AG04450 (cell line): ENCODE measurements at regions of chr6 and their contacts with region 1.

Region 1: DNA sequence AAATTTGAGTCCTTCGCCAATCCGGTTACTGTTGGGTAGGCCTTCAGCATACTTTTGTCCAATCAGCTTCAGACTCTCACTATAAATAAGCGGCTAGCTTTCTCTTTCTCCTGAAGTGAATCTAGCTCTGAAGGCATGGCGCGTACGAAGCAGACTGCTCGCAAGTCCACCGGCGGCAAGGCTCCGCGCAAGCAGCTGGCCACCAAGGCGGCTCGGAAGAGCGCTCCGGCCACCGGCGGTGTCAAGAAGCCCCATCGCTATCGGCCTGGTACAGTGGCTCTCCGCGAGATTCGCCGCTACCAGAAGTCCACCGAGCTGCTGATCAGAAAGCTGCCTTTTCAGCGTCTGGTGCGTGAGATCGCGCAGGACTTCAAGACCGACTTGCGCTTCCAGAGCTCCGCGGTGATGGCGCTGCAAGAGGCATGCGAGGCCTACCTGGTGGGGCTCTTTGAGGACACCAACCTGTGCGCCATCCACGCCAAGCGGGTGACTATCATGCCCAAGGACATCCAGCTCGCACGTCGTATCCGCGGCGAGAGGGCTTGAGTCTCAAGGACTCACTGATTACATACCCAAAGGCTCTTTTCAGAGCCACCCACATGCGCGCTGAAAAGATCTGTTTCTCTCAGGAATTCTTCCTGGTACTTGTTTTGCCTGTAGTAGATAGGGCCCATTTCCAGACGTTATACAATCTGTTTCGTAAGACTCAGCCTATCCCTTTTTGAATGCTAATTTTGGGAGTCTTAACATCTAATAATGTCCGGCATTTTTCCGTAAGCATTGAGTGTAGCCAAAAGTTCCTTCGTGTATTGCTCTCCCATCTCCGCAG is 102.0 kb downstream of the OR2B2 start:
- DNase-seq: peak; percentile 95
- H3K4me3 ChIP-seq: peak overlapping the region; percentile 85
- H3K27ac ChIP-seq: peak overlapping the region; percentile 96
- H3K27me3 ChIP-seq: no peaks in the 10 kb centered on the region
- CTCF ChIP-seq: peak; percentile 24

Region 2: GRCh38 chr6:27795697-27796494 is 14.3 kb before region 1 on chr6:
- CTCF ChIA-PET with region 1: interaction called, 48 read pairs
- POLR2A ChIA-PET with region 1: interaction called, 5 read pairs
- DNase-seq: peak; percentile 84
- H3K4me3 ChIP-seq: no peak overlapping the region
- H3K27ac ChIP-seq: no peak overlapping the region
- H3K27me3 ChIP-seq: no peaks in the 10 kb centered on the region
- CTCF ChIP-seq: peak; percentile 83

Region 3: GRCh38 chr6:27838058-27838944 is 28.1 kb after region 1 on chr6:
- CTCF ChIA-PET with region 1: interaction called, 4 read pairs
- POLR2A ChIA-PET with region 1: interaction called, 53 read pairs
- DNase-seq: peak; percentile 99
- H3K4me3 ChIP-seq: peak overlapping the region; percentile 83
- H3K27ac ChIP-seq: peak overlapping the region; percentile 100
- H3K27me3 ChIP-seq: no peaks in the 10 kb centered on the region
- CTCF ChIP-seq: no peak

Region 4: GRCh38 chr6:27864906-27865849 is 55.0 kb after region 1 on chr6:
- CTCF ChIA-PET with region 1: no interaction called
- POLR2A ChIA-PET with region 1: interaction called, 50 read pairs
- DNase-seq: peak; percentile 94
- H3K4me3 ChIP-seq: peak overlapping the region; percentile 75
- H3K27ac ChIP-seq: peak overlapping the region; percentile 96
- H3K27me3 ChIP-seq: no peaks in the 10 kb centered on the region
- CTCF ChIP-seq: no peak